ENCODE measurements at regions of chr4 and their contacts with region 1.

Region 1: DNA sequence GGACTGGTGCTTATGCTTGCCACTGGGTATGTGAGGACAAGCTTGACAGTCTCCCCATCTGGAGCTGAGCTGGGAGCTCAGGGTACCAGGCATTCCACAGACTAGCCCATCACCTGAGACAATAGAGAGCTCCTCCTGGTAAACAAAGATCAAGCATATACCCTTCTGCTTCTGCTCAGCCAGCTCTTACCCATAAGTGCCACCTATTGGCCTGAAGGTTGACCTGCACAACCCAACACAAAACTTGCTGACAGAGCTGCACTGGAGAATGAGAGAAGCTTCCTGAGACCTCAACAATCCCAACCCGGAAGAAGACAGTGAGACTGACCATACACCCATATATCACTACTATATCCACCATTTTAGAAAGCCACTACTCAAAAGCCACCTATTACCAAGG is 1049.2 kb upstream of the INTU start:
- ATAC-seq: peak in 3 of 8 experiments; percentile 75 to 80 (median 75)
- H3K4me3 ChIP-seq: no peak overlapping the region
- H3K27ac ChIP-seq: no peak overlapping the region
- H3K4me1 ChIP-seq: no peaks in the 10 kb centered on the region

Region 2: DNA sequence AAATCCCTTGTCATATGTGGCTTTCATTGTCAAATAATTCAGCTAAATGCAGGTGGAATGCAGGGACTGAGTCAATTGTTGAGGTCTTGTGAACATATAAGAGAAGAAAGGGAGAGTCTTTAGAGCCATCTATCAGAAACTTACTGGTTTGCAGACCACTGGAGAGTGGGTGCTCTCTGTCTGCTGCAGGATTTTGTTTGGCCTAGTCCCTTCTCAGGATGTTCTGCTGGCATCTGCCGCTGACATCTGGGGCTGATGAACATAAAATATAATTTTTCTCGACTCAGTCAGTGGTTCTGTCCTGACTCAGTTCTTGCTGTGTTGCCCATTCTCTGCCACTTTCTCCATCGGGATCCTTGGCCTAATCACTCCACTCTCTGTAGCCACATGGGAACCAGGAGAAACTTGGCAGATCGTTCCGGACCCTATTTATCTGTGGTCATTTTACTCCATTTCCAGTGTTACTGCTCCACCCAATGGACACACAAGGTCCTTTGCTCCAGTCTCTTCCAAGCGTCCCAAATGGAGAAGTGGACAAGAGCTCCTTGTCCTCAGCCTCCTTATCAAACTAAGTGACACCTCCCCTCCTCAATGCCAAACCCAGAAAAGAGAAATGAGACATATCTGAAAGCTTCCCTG is 832.6 kb before region 1 on chr4:
- in situ Hi-C with region 1: loop called in 1 of 9 experiments (anchors 25 kb)
- ATAC-seq: peak in 4 of 8 experiments; percentile 50 to 90 (median 67)
- H3K4me3 ChIP-seq: no peak overlapping the region
- H3K27ac ChIP-seq: no peak overlapping the region
- H3K4me1 ChIP-seq: no peaks in the 10 kb centered on the region

Region 3: DNA sequence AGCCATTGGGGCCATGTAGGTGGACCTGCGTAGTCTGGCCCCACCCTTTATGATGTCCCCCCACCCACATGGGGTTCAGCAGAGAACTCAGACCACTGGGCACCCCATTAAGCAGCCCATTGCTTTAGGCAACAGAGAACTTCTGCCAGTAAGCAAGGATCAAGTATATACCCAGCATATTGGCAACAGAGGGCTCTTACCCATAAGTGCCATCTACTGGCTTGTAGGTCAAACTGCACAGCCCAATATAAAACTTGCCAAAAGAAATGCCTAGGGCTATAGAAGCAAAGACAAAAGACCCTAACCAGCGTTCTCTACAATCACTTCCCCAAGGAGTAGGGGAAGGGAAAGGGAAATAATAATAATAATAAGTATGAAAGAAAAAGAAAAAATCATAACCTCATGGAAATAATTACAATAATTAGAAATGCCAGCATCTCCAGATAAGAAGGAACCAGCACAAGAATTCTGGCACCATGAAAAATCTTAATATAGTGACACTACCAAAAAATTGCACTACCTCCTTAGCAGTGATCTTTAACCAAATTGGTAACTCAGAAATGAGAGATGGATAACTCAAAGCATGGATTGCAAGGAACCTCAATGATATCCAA is 178.0 kb before region 1 on chr4:
- in situ Hi-C with region 1: loop called in 1 of 9 experiments (anchors 25 kb)
- ATAC-seq: peak in 3 of 8 experiments; percentile 29 to 52 (median 34)
- H3K4me3 ChIP-seq: no peak overlapping the region
- H3K27ac ChIP-seq: no peak overlapping the region
- H3K4me1 ChIP-seq: no peaks in the 10 kb centered on the region

Region 4: GRCh38 chr4:126479709-126480108 is 103.8 kb before region 1 on chr4:
- in situ Hi-C with region 1: no loop called
- ATAC-seq: no peak
- H3K4me3 ChIP-seq: no peak overlapping the region
- H3K27ac ChIP-seq: no peak overlapping the region
- H3K4me1 ChIP-seq: no peaks in the 10 kb centered on the region